Activated CD4-positive, alpha-beta memory T cell treated with anti-CD3 and anti-CD28 coated beads, Interleukin-2, amount 10 ng/mL, durations not matched to agents 7 days and 5 days (primary cell): ENCODE measurements at regions of chr1 and their contacts with region 1.

Region 1: GRCh38 chr1:176559878-176560277 is 96.9 kb downstream of the PAPPA2 start:
- DNase-seq: peak; percentile 18
- H3K4me3 Mint-ChIP-seq: no peak overlapping the region
- H3K27ac Mint-ChIP-seq: no peak overlapping the region
- H3K4me1 Mint-ChIP-seq: no peaks in the 10 kb centered on the region
- H3K27me3 Mint-ChIP-seq: no peaks in the 10 kb centered on the region

Region 2: DNA sequence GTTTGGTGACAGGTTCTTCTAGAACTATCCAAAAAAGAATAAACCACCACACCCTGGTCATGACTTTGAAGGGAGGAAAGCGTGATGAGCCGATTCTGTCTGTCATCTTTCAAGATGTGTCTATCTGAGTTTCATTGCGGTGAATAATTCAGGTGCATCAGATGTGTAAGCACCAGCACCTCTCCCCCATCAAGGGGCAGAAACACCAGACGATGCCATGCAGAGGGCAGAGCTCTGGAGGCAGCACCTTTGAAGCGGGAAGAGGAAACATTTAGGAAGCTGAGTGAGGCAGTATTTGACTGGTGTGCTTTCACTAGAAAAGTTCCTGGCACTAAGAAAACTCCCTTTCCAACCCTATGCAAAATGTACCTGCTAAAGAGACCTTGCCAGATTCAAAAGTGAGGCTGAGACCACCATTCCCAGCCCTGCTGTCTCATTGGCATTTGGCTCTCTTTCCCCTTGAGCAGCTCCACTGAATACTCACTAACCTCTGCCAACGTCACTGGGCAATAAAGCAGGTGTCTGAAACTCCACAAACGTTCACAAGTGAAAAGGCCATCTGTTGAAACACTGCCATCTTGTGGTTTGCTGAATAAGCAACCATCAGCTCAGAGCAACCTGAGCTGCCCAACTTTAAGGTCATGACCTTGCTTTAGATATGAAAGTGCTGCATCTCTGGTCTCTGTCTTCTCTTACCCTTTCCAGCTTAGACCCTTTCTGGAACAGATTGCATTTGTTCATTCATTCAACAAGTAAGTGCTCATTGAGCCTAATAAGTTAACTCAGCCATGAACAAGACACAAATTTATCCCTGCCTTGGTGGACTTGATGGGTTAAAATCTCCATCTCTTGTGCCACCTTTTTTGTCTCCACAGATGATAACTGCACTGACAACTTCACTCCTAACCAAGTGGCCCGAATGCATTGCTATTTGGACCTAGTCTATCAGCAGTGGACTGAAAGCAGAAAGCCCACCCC is 131.7 kb after region 1 on chr1:
- CTCF ChIA-PET with region 1: interaction called, 13 read pairs
- POLR2A ChIA-PET with region 1: no interaction called
- DNase-seq: no peak
- H3K4me3 Mint-ChIP-seq: no peak overlapping the region
- H3K27ac Mint-ChIP-seq: no peak overlapping the region
- H3K4me1 Mint-ChIP-seq: no peaks in the 10 kb centered on the region
- H3K27me3 Mint-ChIP-seq: no peaks in the 10 kb centered on the region